Dendritic cell treated with granulocyte-macrophage colony-stimulating factor and Interleukin-4, amounts not matched to agents 40 ng/mL and 50 ng/mL, for 4 days (primary cell): ENCODE measurements at regions of chr3 and their contacts with region 1.

Region 1: DNA sequence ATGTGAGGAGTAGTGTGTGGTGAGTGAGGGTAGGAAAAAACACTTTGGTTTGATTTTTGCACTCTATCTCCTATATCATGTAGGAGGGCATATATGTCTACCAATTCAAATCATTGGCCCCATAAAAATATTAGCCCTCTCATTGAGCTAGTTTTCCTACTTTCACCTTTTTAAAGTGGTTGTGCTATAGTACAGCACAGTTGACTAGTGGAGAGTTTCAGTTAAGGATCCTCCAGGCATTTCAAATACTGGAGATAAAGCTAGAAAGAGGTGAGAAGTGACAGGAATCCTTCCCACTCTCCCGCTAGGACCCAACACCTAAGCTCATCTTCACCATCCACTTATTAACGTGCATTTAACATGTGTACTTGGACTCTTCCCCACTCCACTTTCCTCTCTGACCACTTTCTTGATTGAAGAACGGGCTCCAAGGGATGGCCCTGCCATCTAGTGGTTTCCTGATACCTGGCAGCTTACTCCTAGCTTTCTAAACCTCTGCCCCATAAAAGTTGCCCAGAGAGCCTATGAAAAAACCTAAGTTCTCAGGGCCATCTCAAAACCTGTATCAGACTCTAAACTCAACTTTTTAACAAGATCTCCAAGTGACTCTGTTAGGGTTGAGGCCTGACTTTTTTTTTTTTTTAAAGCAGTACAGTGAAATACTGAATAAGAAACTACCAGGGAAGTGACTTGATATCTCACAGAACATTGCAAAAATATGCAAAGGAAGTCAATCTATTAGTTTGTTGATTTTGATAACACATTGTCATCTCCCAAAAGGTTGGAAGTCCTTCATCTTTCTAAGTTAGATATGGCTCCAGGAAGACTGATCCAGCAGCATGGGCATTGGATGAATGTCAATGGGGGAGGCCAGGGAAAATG is 17.9 kb downstream of the IL12A start:
- H3K4me3 Mint-ChIP-seq: no peak overlapping the region
- H3K27ac Mint-ChIP-seq: no peak overlapping the region
- H3K4me1 Mint-ChIP-seq: peaks cover 20% of the 10 kb centered on the region
- H3K27me3 Mint-ChIP-seq: no peaks in the 10 kb centered on the region

Region 2: GRCh38 chr3:158762701-158763100 is 1243.8 kb before region 1 on chr3:
- intact Hi-C with region 1: no loop called
- H3K4me3 Mint-ChIP-seq: no peak overlapping the region
- H3K27ac Mint-ChIP-seq: no peak overlapping the region
- H3K4me1 Mint-ChIP-seq: no peaks in the 10 kb centered on the region
- H3K27me3 Mint-ChIP-seq: peaks cover 2% of the 10 kb centered on the region

Region 3: GRCh38 chr3:159200176-159200575 is 806.3 kb before region 1 on chr3:
- intact Hi-C with region 1: no loop called
- H3K4me3 Mint-ChIP-seq: no peak overlapping the region
- H3K27ac Mint-ChIP-seq: no peak overlapping the region
- H3K4me1 Mint-ChIP-seq: no peaks in the 10 kb centered on the region
- H3K27me3 Mint-ChIP-seq: no peaks in the 10 kb centered on the region

Region 4: DNA sequence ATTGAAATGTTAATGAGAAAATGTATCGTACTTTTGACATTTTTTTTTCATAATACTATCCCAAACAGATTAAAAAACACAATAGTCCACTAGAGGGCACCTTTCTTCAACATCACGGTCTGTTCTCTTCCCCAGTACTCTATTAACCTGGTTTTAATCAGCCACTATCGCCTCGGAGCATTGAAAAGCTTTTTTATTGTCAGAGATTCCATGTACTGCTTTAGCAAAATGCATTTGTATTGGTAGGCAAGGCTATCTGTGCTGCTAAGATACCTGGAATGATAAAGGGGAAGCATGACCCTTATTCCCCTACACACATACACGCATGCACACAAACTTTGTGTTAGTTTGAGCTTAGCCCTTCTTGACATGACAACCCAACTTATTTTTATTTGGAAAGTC is 178.0 kb before region 1 on chr3:
- intact Hi-C with region 1: loop called (anchors 1 kb)
- H3K4me3 Mint-ChIP-seq: no peak overlapping the region
- H3K27ac Mint-ChIP-seq: no peak overlapping the region
- H3K4me1 Mint-ChIP-seq: no peaks in the 10 kb centered on the region
- H3K27me3 Mint-ChIP-seq: no peaks in the 10 kb centered on the region

Region 5: DNA sequence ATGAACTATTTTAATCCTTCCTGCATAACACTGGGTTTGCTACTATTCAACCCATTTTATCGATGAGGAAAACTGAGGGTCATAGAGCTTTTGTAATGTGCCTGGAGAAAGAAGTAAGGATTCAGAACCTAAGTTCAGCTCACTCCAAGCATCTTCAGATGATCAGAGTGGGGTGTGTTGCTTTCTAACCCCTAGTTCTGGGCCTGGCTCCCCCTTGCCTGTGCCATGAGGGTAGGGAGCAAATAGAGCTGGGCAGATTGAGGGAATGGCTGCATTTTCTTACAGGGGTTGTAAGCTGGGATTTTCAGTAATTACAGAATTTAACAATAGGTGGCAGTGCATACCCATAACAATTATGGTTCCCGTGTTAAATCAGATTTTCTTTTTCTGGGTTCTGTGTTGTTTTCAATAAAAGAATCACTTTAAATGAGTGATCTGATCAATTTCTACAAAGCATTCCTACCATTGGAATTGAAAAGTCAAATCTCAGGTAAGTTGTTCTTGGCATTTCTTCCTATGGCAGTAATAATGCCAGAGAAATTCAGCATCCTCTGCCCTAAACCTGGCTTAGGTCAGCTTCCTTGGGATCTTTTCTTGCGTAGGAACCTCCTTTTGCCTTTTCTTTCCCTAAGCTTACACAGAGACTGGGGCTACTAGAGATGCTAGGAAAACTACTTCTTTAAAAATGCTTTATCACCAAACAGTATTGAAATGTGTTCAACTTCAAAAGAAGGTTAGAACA is 121.7 kb before region 1 on chr3:
- intact Hi-C with region 1: loop called (anchors 1 kb)
- H3K4me3 Mint-ChIP-seq: no peak overlapping the region
- H3K27ac Mint-ChIP-seq: no peak overlapping the region
- H3K4me1 Mint-ChIP-seq: peaks cover 10% of the 10 kb centered on the region
- H3K27me3 Mint-ChIP-seq: no peaks in the 10 kb centered on the region

Region 6: GRCh38 chr3:159929435-159930141 is 76.9 kb before region 1 on chr3:
- intact Hi-C with region 1: loop called (anchors 2 kb)
- H3K4me3 Mint-ChIP-seq: peak overlapping the region; percentile 32
- H3K27ac Mint-ChIP-seq: peak overlapping the region; percentile 81
- H3K4me1 Mint-ChIP-seq: peaks cover 37% of the 10 kb centered on the region
- H3K27me3 Mint-ChIP-seq: no peaks in the 10 kb centered on the region